Activated CD4-positive, alpha-beta memory T cell treated with anti-CD3 and anti-CD28 coated beads, Interleukin-2, amount 10 ng/mL, durations not matched to agents 7 days and 5 days (primary cell): ENCODE measurements at regions of chr12 and their contacts with region 1.

Region 1: DNA sequence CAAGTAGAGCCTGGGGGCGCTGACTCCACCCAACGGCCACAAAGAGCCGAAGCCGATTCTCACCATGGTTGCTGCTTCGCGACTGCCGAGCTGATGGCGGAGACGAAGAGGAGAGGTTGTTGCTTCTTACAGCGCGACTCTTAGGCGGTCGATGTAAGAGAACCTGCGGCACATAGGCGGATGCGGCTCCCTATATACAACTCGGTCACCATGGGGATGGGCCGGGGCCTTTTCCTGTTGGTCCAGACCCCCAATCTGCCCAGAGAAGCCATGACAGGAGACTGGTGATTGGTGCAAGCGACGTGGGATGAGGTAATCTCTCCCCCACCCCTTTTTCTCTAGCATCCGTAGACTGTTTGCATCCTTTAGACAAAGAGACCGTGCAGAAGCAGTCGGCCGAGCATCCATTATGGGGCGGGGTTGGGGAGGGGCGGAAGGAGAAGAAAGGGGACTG is at the start of gene TUBA1A:
- DNase-seq: peak; percentile 98
- H3K4me3 Mint-ChIP-seq: peak within 1 kb of the TSS; percentile 81
- H3K27ac Mint-ChIP-seq: peak within 1 kb of the TSS; percentile 94
- H3K4me1 Mint-ChIP-seq: peaks cover 30% of the 10 kb centered on the region
- H3K27me3 Mint-ChIP-seq: peaks cover 3% of the 10 kb centered on the region
- total RNA-seq, gene TUBA1A: 106 to 109 TPM

Region 2: DNA sequence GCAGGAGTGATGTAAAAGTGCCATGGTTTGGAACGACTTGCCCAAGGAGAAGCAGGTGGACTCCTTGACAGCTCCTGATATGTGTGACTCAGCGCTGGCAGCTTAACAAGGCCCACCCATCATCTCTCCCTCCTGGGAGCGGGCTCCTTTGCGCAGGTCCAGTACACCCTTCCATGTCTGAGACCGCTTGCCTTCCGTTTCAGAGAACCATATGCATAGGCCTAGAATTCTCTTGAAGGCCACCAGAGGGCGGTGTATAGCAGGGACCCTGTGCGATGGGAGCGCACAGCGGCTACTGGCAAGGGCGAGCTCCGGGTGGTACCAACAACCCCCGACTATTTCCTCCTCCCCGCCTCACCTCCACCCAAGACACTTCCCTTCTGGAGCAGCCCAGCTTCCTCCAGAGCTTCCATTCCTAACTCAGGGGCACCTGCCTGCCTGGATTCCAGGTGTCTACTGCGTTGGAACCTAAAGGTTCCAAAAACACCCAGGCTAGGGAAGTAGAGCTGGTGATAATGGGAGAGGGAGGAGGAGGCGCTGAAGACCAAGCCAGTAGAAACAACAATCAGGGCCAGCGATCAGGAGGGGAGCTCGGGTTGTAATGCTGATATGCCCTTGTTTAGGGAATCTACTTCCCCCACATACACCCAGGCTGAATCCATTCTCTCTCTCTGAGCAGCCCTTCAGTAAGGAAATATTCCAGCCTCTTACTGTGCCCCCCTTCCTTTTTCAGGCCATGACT is 100.6 kb before region 1 on chr12:
- CTCF ChIA-PET with region 1: interaction called, 11 read pairs
- POLR2A ChIA-PET with region 1: interaction called, 5 read pairs
- DNase-seq: peak; percentile 75
- H3K4me3 Mint-ChIP-seq: peak overlapping the region; percentile 22
- H3K27ac Mint-ChIP-seq: peak overlapping the region; percentile 24
- H3K4me1 Mint-ChIP-seq: peaks cover 64% of the 10 kb centered on the region
- H3K27me3 Mint-ChIP-seq: peaks cover 44% of the 10 kb centered on the region

Region 3: DNA sequence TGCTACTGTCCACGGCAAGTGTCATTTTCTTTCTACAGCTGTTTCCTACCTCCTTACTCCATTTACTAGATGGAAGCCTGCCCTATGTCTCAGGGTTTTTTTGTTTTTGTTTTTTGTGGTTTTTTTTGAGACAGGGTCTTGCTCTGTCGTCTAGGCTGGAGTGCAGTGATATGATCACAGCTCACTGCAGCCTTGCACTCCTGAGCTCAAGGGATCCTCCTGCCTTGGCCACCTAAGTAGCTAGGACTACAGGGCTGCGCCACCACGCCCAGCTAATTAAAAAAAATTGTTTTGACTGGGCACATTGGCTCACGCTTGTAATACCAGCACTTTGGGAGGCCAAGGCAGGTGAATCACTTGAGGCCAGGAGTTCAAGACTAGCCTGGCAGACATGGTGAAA is 14.7 kb before region 1 on chr12:
- CTCF ChIA-PET with region 1: interaction called, 5 read pairs
- POLR2A ChIA-PET with region 1: interaction called, 24 read pairs
- DNase-seq: no peak
- H3K4me3 Mint-ChIP-seq: no peak overlapping the region
- H3K27ac Mint-ChIP-seq: no peak overlapping the region
- H3K4me1 Mint-ChIP-seq: no peaks in the 10 kb centered on the region
- H3K27me3 Mint-ChIP-seq: no peaks in the 10 kb centered on the region

Region 4: DNA sequence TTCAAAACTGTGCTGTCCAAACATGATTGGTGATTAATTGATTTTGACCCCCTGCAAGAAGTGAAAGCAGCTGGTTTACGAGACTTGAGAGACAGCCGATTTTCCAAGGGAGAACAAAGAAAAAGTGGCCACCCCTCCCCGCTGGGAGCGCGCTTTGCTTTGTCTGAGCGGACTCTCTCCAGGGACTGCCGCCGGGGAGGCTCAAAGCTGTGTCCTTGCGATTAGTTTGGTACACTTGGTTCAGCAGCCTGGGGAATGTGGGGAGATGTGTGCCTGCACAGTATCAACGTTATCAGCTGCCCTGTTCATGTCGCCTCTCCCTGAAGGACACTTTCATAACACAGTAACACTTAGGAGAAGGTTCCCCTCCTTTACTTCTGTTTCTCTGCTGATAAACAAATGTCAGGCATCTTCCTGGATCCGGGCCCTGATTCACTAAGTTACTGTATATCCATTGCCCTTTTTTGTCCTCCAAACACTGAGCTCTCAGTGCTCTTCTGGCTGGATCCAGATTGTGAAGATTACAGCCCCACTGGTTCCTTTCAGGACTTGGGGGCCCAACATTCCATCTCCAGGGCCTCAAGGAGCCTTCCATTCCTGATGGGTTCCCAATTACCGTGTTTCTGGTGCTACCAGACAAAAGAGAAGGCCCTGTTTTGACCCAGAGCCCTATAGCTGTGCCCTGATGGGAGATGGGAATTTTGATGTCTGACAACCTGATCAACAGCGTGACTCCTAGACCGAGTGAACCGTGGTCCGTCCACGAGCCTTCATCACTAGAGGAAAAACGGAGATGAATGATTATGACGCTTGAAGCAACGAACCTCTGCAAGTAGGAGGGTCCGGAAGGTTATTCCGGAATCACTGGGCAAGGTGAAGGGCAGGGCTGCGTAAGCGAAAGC is 44.2 kb after region 1 on chr12:
- CTCF ChIA-PET with region 1: interaction called, 23 read pairs
- POLR2A ChIA-PET with region 1: interaction called, 25 read pairs
- DNase-seq: no peak
- H3K4me3 Mint-ChIP-seq: peak overlapping the region; percentile 16
- H3K27ac Mint-ChIP-seq: peak overlapping the region; percentile 45
- H3K4me1 Mint-ChIP-seq: peaks cover 25% of the 10 kb centered on the region
- H3K27me3 Mint-ChIP-seq: peaks cover 3% of the 10 kb centered on the region

Region 5: GRCh38 chr12:49322708-49323523 is 134.0 kb after region 1 on chr12 and contains the start of gene TROAP:
- CTCF ChIA-PET with region 1: no interaction called
- POLR2A ChIA-PET with region 1: interaction called, 12 read pairs
- DNase-seq: peak; percentile 99
- H3K4me3 Mint-ChIP-seq: peak within 1 kb of the TSS; percentile 94
- H3K27ac Mint-ChIP-seq: peak within 1 kb of the TSS; percentile 86
- H3K4me1 Mint-ChIP-seq: peaks cover 33% of the 10 kb centered on the region
- H3K27me3 Mint-ChIP-seq: no peaks in the 10 kb centered on the region
- total RNA-seq, gene TROAP: 75.1 to 79.5 TPM

Region 6: DNA sequence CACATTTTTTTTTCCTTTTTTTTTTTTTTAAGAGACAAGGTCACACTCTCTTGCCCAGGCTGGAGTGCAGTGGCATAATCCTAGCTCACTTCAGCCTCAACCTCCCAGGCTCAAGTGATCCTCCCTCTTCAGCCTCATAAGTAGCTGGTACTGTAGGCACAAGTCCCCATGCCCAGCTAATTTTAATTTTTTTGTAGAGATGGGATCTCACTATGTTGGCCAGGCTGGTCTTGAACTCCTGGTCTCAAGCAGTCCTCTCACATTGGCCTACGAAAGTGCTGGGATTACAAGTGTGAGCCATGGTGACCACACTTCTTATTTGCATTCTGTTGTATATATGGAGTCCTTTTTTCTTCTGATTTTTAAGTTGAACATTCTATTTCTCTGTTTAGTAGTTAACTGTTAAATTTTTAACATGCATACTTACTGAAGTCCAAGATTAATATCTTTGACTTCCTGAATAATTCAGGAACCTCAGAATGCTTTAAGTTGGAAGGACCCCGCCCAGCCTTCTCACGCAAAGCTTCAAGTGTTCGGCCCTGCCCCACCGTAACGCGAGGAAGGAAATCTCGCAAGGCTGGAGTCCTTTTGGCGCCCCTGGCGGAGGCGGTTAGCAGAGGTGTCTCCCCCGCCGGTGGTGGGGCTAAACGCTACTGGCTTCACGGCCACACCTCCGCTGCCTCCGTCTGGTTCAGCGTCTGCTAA is 199.9 kb after region 1 on chr12:
- CTCF ChIA-PET with region 1: no interaction called
- POLR2A ChIA-PET with region 1: no interaction called
- DNase-seq: peak; percentile 70
- H3K4me3 Mint-ChIP-seq: no peak overlapping the region
- H3K27ac Mint-ChIP-seq: no peak overlapping the region
- H3K4me1 Mint-ChIP-seq: peaks cover 8% of the 10 kb centered on the region
- H3K27me3 Mint-ChIP-seq: no peaks in the 10 kb centered on the region